ENCODE measurements at regions of chr19 and their contacts with region 1.

Region 1: DNA sequence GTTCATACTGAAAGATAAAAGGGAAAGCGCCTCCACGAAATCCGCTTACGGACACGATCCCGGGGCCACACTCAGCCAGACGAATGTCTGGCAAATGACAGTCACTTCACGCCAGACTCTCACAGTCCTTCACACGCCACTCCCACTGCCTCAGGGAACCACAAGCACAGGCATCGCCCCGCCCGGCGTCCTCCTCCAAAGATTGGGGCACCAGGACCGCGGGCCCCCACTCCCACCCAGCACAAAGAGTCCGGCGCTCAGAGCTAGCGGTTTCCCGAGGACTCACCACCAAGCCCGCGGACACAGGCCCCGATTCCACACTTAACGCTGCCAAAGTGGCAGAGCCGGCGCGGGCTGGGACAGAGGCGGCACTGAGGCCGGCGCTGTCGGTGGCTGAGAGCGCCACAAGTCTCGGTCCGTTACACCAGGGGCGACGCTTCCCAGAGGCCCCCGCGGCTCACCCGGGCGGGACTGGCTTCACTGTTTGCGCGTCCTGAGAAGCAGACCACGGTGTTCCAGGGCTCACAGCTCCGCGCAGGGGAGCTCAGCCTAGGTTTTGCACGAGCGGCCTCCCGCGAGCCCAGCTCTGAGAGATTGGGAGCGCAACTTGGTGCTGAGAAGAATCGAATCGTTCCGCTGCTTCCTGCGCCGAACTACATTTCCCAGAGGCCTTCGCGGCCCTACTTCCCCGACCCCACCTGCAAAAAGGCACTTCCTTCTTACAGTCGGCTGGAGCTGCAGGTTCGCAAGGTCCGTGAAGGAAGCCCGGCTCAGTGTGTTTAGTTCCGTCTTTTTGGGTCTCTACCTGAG is at the start of gene ZNF569:
- DNase-seq: peak; percentile 94
- H3K4me3 ChIP-seq: peak within 1 kb of the TSS; percentile 62 to 91 (median 80)
- H3K27ac ChIP-seq: peak within 1 kb of the TSS; percentile 90 to 95 (median 94)
- H3K4me1 ChIP-seq: peaks cover 0 to 30% (median 23%) of the 10 kb centered on the region in 4 donors
- H3K27me3 ChIP-seq: no peaks in the 10 kb centered on the region
- CTCF ChIP-seq: no peak
- EP300 ChIP-seq: no peak
- POLR2A ChIP-seq: peak in 1 of 2 donors; percentile 12
- total RNA-seq, gene ZNF569: 4.7 to 10.7 (median 5.9) TPM

Region 2: GRCh38 chr19:36973021-36973843 is 493.8 kb before region 1 on chr19:
- intact Hi-C with region 1: loop called (anchors 5 kb)
- DNase-seq: peak; percentile 92
- H3K4me3 ChIP-seq: peak overlapping the region; percentile 56 to 74 (median 64)
- H3K27ac ChIP-seq: peak overlapping the region; percentile 80 to 88 (median 86)
- H3K4me1 ChIP-seq: peaks cover 0 to 16% (median 14%) of the 10 kb centered on the region in 4 donors
- H3K27me3 ChIP-seq: no peaks in the 10 kb centered on the region
- CTCF ChIP-seq: peak; percentile 95 to 99 (median 98)
- EP300 ChIP-seq: no peak
- POLR2A ChIP-seq: no peak

Region 3: DNA sequence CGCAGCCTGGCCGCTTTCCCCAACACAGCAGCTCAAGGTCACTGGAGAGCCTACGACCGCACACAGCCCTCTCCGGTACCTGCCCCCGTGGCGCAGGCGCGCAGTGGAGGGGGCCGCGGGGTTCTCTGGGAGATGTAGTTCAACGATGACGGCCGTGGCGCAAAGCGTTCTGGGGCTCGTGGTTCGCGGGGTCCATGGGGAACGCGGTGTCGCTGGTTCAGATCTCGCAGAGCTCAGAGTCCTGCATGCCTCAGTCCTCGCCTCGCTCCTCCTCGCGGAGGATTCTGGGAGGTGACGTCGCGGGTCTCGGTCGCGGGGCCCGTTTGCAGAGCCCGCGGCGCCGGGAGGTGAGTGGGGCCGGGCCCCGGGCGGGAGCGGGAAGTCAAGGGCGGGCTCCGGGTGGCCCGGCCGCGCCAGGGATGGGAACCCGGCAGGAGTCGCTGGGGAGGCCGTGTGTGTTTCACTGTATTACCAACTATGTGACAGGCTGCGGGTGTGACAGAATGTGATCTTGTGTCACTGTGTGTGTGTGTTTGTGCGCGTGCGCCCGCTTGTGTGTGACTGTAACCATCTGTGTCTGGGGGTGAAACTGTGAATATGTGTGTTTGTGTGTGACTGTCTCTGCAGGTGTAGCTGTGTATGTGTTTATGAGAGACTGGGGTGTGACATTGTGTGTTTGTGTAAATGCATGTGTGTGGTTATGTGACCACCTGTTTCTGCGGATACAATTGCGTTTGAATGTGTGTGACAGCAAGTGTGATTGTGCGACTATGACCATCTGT is 95.9 kb before region 1 on chr19 and contains the start of gene ZNF527:
- intact Hi-C with region 1: loop called (anchors 5 kb)
- DNase-seq: peak; percentile 98
- H3K4me3 ChIP-seq: peak within 1 kb of the TSS; percentile 64 to 74 (median 66)
- H3K27ac ChIP-seq: peak within 1 kb of the TSS; percentile 83 to 91 (median 86)
- H3K4me1 ChIP-seq: peaks cover 0 to 14% (median 6%) of the 10 kb centered on the region in 4 donors
- H3K27me3 ChIP-seq: no peaks in the 10 kb centered on the region
- CTCF ChIP-seq: no peak
- EP300 ChIP-seq: peak in 1 of 4 donors; percentile 31
- POLR2A ChIP-seq: peak in 1 of 2 donors; percentile 90
- total RNA-seq, gene ZNF527: 6.1 to 13.8 (median 9.7) TPM

Region 4: DNA sequence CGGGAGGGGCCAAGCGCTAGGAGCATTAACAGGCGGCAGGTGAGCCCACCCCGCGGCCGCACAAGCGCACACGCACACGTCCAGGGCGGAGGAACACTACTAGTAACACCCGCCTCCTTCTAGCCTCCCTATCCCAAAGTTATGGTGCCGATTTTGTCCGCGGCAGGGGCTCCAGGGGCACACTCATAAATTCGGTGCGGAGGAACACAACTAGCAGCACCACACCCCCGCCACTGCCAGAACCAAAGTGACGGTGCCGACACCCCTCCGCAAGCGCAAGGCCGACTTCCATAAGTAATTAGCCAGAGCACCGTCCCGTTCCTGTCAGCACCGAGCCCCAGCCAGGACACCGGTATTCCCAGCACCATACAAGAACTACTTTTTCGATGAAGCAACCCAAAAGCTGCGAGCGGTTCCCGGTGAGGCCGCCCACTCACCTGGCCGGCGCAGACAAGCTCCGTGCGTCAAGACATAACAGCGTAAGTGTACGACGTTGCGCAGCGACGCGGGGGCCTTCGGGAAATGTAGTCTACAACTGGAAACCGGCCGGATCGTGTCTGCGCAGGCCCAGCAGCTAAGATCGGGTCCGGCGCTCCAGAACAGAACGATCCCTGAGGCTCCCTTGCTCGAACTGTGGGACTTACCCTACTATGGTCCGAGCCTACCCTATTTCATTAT is 127.4 kb after region 1 on chr19 and contains the starts of genes ZNF540 and ZNF571:
- intact Hi-C with region 1: loop called (anchors 2 kb)
- DNase-seq: peak; percentile 97
- H3K4me3 ChIP-seq: peak within 1 kb of the TSS; percentile 53 to 88 (median 69)
- H3K27ac ChIP-seq: peak within 1 kb of the TSS; percentile 90 to 92 (median 92)
- H3K4me1 ChIP-seq: peaks cover 0 to 18% (median 17%) of the 10 kb centered on the region in 4 donors
- H3K27me3 ChIP-seq: no peaks in the 10 kb centered on the region
- CTCF ChIP-seq: no peak
- EP300 ChIP-seq: peak in 1 of 4 donors; percentile 88
- POLR2A ChIP-seq: peak; percentile 57 to 64
- total RNA-seq, gene ZNF540: 6.4 to 8.0 (median 7.1) TPM
- total RNA-seq, gene ZNF571: 3.1 to 11.4 (median 5.2) TPM

Region 5: GRCh38 chr19:37719111-37719926 is 252.3 kb after region 1 on chr19 and contains the start of gene ZNF607:
- intact Hi-C with region 1: loop called (anchors 2 kb)
- DNase-seq: peak; percentile 92
- H3K4me3 ChIP-seq: peak within 1 kb of the TSS; percentile 78 to 97 (median 94)
- H3K27ac ChIP-seq: peak within 1 kb of the TSS; percentile 84 to 92 (median 87)
- H3K4me1 ChIP-seq: peaks cover 0 to 15% (median 11%) of the 10 kb centered on the region in 4 donors
- H3K27me3 ChIP-seq: no peaks in the 10 kb centered on the region
- CTCF ChIP-seq: peak; percentile 23 to 55 (median 50)
- EP300 ChIP-seq: no peak
- POLR2A ChIP-seq: peak; percentile 38 to 60
- total RNA-seq, gene ZNF607: 3.7 to 7.2 (median 4.8) TPM

Measured in sigmoid colon (tissue), 7 donors.